Sciatic nerve (tissue), 2 donors: ENCODE measurements at regions of chr5 and their contacts with region 1.

Region 1: GRCh38 chr5:152309926-152310450 is 95.1 kb downstream of the NMUR2 start:
- DNase-seq: no peak
- ATAC-seq: no peak

Region 2: DNA sequence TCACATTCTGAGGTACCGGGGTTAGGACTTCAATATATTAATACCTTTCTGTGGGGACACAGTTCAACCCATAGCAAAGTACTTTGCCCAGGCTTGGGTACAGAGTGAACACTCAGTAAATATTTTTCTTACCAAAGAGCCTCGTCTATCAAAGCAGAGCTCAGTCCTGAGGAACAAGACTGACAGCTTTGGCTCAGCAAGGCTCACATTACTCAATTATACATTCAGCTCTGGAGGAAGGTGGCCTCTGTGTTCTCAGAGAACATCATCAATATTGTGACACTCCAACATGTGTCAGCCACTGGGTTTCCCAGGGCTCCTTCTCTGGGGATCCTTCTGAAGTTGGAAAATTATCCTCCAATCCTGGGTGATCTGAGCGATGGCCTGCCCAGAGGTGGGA is 91.3 kb before region 1 on chr5:
- intact Hi-C with region 1: loop called (anchors 5 kb)
- DNase-seq: no peak
- ATAC-seq: no peak

Region 3: DNA sequence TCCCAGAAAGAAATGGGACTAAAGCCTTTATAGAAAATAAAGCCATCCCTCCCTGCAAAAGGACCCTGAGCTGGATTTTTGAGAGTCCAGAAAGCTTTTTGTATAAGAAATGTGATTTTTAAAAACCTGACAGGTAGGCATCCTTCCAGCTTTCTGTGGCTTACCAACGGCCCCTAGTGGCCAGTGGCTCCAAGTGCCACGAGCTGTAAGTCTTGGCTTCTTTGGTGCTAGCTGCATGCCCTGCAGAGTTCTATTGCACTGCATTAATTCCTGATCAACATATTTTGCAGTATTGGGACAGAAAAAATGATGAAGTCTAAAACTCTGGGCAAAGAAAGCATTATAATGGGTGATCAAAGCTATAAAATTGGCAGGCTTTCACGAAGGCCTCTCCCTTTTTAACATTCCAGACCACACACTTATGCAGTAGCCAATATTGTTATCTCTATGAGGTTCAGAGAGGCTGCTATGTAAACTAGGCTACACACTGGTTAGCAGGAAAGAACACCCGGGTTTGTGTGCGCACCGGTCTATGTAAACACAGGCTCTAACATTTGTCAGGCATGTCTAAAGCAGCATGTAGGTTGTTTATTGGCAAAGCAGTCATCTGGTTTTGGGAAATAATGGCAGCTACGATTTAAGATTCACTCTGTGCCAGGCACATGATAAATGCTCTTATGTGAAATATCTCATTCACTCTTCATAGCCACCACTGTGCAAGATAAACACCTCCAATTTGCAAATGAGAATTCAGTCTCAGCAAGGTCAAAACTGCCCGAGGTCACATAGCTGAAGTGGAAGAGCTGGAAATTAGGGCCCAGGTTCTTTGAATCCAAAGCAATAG is 39.9 kb after region 1 on chr5:
- intact Hi-C with region 1: no loop called
- DNase-seq: peak; percentile 57
- ATAC-seq: no peak

Region 4: GRCh38 chr5:154010660-154011059 is 1700.7 kb after region 1 on chr5:
- intact Hi-C with region 1: no loop called
- DNase-seq: no peak
- ATAC-seq: no peak